ENCODE measurements at regions of chr6 and their contacts with region 1.

Region 1: DNA sequence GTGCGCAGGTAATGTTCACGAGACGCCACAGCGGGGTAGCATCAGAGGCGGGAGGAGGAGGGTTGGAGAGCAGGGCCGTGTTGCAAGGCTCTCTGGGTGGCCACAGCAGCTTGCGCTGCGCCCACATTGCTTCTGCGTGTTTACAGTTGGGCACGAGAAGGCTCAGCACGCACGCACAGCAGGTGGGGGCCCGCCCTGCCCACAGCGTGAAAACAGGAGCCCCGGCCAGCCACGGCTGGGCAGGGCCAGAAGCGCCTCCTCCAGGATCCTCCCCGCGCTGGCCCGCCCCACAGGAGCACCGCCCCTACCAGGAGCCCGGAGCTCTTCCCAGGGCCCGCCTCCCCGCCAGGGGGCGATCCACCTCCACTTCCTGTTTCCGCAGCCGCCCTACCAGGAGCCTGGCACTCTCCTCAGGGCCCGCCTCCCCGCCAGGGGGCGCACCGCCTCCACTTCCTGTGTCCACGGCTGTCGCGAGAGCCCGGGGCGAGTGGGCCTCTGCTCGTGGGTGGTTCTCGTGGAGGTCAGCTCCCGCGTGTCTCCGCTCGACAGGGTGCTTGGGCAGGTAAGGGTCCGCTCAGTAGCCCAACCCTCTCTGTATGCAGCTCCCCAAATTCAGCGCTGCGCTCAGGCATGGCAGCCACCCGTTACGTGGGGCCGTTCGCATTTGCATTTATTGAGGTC is at the start of gene FAM50B:
- DNase-seq: peak; percentile 86 to 99 (median 92)

Region 2: GRCh38 chr6:3748208-3749066 is 100.6 kb before region 1 on chr6:
- intact Hi-C with region 1: loop called (anchors 2 kb)
- DNase-seq: peak in 4 of 10 donors; percentile 47 to 87 (median 67)